ENCODE measurements at regions of chr1 and their contacts with region 1.

Region 1: GRCh38 chr1:201023517-201023902 is at the start of gene KIF21B:
- DNase-seq: peak; percentile 92
- H3K4me3 Mint-ChIP-seq: peak within 1 kb of the TSS; percentile 100
- H3K27ac Mint-ChIP-seq: peak within 1 kb of the TSS; percentile 99
- H3K4me1 Mint-ChIP-seq: peaks cover 79% of the 10 kb centered on the region
- H3K27me3 Mint-ChIP-seq: no peaks in the 10 kb centered on the region
- total RNA-seq, gene KIF21B: 50.4 and 52.0 TPM in 2 replicates

Region 2: DNA sequence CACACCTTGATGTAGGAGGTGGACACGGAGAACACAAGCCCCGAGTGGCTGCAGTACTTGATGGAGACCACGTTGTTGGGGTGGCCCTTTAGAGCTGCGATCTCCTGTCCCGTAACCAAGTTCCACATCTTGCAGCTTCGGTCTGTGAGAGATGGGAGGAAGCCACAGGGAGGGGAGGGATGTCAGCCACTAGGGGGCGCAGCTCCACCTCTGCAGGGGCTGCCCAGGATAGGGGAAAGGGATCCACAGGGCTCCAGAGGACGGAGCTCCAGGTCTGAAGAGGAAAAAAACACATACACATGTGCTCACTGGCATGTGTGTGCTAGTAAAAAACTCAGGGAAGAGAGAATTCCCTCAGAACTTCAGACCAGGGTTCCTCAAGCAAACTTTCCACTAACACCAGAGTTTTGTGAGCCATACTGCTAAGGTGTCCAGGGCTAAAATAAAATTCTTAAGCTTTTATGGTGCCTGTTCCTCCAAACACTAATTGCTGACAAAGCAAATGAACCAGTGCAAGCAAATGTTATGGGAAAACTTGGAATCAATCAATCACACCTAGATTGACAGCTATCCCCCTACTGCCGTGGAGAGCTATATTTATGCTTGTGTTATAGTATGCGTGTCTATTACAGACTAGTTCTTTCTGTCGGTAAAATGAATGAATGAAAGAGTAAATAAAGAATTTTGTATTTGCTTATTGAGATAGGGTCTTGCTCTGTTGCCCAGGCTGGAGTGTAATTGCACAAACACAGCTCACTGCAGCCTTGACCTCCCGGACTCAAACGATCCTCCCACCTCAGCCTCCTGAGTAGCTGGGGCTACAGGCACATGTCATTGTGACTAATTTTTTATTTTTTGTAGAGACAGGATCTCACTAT is 43.7 kb before region 1 on chr1:
- intact Hi-C with region 1: loop called (anchors 1 kb)
- DNase-seq: peak; percentile 26
- H3K4me3 Mint-ChIP-seq: no peak overlapping the region
- H3K27ac Mint-ChIP-seq: no peak overlapping the region
- H3K4me1 Mint-ChIP-seq: no peaks in the 10 kb centered on the region
- H3K27me3 Mint-ChIP-seq: no peaks in the 10 kb centered on the region

Region 3: DNA sequence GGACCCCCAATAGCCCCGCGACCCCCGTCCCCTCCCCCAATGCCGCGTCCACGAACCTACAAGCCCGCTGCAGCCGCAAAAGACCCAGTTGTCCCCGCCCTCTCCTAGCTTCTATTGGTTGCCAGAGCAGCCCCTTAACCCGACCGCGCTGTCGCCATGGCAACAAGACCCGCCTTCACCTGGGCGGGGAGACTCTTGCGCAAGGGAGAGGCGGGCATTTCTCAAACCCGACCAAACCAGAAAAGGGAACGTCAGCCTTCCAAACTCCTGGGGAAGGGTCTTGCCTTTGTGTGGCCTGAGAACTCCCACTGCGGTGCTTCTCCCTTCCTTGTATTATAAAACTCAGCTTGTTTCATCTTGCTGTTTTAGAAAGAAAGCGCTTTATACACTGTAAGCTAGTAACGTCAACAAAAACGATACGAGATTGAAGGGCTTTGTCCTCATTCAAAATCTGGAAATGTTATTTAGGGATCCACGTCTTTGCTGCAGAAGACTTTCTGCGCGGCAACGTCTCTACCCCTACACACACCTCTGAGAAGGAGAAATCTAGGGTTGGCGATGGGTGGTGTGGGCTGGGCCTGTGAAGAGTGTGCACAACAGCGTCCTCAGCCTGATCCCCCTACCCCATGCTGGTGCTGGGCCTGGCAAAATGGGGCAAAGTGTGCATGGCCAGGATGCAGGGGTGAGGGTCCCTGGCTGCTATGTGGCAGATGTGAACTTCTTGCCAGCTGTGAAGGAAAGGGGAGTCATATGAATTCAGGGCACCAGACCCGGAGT is 131.1 kb after region 1 on chr1 and contains the start of gene TMEM9:
- intact Hi-C with region 1: loop called (anchors 1 kb)
- DNase-seq: peak; percentile 95
- H3K4me3 Mint-ChIP-seq: peak within 1 kb of the TSS; percentile 85
- H3K27ac Mint-ChIP-seq: peak within 1 kb of the TSS; percentile 88
- H3K4me1 Mint-ChIP-seq: peaks cover 23% of the 10 kb centered on the region
- H3K27me3 Mint-ChIP-seq: peaks cover 18% of the 10 kb centered on the region
- total RNA-seq, gene TMEM9: 13.2 and 13.9 TPM in 2 replicates

Region 4: GRCh38 chr1:201955009-201955728 is 931.7 kb after region 1 on chr1 and contains the start of gene TIMM17A:
- intact Hi-C with region 1: loop called (anchors 10 kb)
- DNase-seq: peak; percentile 94
- H3K4me3 Mint-ChIP-seq: peak within 1 kb of the TSS; percentile 98
- H3K27ac Mint-ChIP-seq: peak within 1 kb of the TSS; percentile 97
- H3K4me1 Mint-ChIP-seq: peaks cover 21% of the 10 kb centered on the region
- H3K27me3 Mint-ChIP-seq: peaks cover 3% of the 10 kb centered on the region
- total RNA-seq, gene TIMM17A: 117 and 127 TPM in 2 replicates

Measured in activated T-helper 1 cell treated with anti-CD3 and anti-CD28 coated beads, Interleukin-12 subunit alpha, Interleukin-12 subunit beta, Interleukin-2, Interleukin-4 antibody, amounts not matched to agents 30 ng/mL and 10 ng/mL and 1 ng/mL, durations not matched to agents 14 hours and 24 hours and 36 hours (primary cell).